ENCODE measurements at regions of chr3 and their contacts with region 1.

Region 1: DNA sequence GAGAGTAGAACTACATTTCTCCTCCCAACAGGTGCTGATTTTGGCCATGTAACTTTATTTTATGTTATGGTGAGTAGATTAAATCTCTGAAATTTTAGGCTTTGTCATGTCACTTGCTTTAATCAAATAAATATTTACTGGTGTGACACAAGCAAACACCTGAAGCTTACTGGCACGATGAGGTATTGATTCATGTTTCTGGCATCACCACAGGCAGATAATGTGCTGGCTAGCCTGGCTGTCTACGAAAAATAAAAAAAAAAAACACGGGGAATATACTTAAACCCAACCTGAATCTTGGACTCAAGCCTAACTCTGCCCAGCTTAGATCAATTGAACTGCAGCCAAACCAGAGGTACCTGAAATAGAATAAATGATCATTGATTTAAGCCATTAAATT is 65.6 kb upstream of the CADM2 start:
- DNase-seq: no peak
- ATAC-seq: no peak
- H3K4me3 ChIP-seq: no peak overlapping the region
- H3K27ac ChIP-seq: no peak overlapping the region
- H3K4me1 ChIP-seq: no peaks in the 10 kb centered on the region
- H3K27me3 ChIP-seq: no peaks in the 10 kb centered on the region

Region 2: DNA sequence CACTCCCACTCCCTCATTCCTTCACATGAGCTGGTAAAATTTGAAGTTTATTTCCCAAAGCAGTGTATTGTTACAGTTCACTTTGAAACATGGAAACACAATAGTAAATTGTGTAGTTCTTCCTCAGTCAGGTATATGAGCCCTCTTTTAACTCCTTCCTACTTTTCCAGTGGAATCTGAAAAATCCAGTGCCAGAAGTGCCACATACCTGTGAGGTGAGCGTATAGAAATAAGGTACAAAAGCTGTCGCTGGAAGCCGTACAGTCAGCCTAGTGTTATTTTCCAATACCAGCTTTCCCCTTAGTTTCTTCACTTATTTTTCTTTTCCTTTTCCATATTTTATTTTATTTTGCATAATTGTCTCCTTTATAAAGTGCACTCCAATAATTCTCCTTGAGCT is 16.1 kb before region 1 on chr3:
- intact Hi-C with region 1: loop called in 1 of 2 experiments (anchors 1 kb)
- DNase-seq: no peak
- ATAC-seq: no peak
- H3K4me3 ChIP-seq: no peak overlapping the region
- H3K27ac ChIP-seq: no peak overlapping the region
- H3K4me1 ChIP-seq: no peaks in the 10 kb centered on the region
- H3K27me3 ChIP-seq: no peaks in the 10 kb centered on the region

Measured in aorta (tissue), 5 donors.